Endothelial cell of umbilical vein (primary cell): ENCODE measurements at regions of chr13 and their contacts with region 1.

Region 1: GRCh38 chr13:75635828-75636435 is at the start of gene LMO7:
- DNase-seq: peak; percentile 15
- H3K4me3 ChIP-seq: peak within 1 kb of the TSS; percentile 44 to 62 (median 56)
- H3K27ac ChIP-seq: no peak within 1 kb of the TSS
- H3K4me1 ChIP-seq: peaks cover 9% of the 10 kb centered on the region
- H3K27me3 ChIP-seq: no peaks in the 10 kb centered on the region
- CTCF ChIP-seq: no peak
- POLR2A ChIP-seq: no peak
- total RNA-seq, gene LMO7: 21.1 and 43.6 TPM in 2 replicates

Region 2: DNA sequence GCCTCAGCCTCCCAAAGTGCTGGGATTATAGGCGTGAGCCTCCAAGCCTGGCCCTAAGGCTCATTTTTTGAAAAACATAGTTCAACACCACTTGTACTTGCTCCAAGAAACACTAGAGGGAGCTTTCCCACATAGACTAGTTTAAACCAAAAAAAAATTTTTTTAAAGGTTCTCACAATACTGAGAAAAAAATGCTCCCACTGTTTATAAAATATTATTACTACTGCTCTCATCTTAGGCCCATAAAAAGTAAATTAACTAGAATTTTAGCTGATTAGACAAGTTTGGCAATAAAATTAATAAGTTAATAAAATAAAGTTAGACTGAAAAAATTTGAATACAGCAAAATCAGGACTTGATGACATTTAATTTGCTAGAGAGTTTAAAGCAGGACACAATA is 263.4 kb before region 1 on chr13:
- CTCF ChIA-PET with region 1: no interaction called
- POLR2A ChIA-PET with region 1: no interaction called
- dilution Hi-C with region 1: no loop called
- intact Hi-C with region 1: loop called (anchors 5 kb)
- DNase-seq: peak; percentile 55
- H3K4me3 ChIP-seq: no peak overlapping the region
- H3K27ac ChIP-seq: no peak overlapping the region
- H3K4me1 ChIP-seq: peaks cover 18% of the 10 kb centered on the region
- H3K27me3 ChIP-seq: no peaks in the 10 kb centered on the region
- CTCF ChIP-seq: peak; percentile 36 to 49
- POLR2A ChIP-seq: no peak

Region 3: GRCh38 chr13:76350399-76350798 is 714.5 kb after region 1 on chr13:
- CTCF ChIA-PET with region 1: no interaction called
- POLR2A ChIA-PET with region 1: no interaction called
- dilution Hi-C with region 1: no loop called
- intact Hi-C with region 1: no loop called
- DNase-seq: no peak
- H3K4me3 ChIP-seq: no peak overlapping the region
- H3K27ac ChIP-seq: no peak overlapping the region
- H3K4me1 ChIP-seq: no peaks in the 10 kb centered on the region
- H3K27me3 ChIP-seq: no peaks in the 10 kb centered on the region
- CTCF ChIP-seq: no peak
- POLR2A ChIP-seq: no peak

Region 4: GRCh38 chr13:76503766-76504165 is 867.8 kb after region 1 on chr13:
- CTCF ChIA-PET with region 1: no interaction called
- POLR2A ChIA-PET with region 1: no interaction called
- dilution Hi-C with region 1: no loop called
- intact Hi-C with region 1: no loop called
- DNase-seq: no peak
- H3K4me3 ChIP-seq: no peak overlapping the region
- H3K27ac ChIP-seq: no peak overlapping the region
- H3K4me1 ChIP-seq: peaks cover 7% of the 10 kb centered on the region
- H3K27me3 ChIP-seq: no peaks in the 10 kb centered on the region
- CTCF ChIP-seq: no peak
- POLR2A ChIP-seq: no peak